K562 (cell line): ENCODE measurements at regions of chr1 and their contacts with region 1.

Region 1: GRCh38 chr1:24502709-24503058 is at the start of gene RCAN3:
- DNase-seq: peak; percentile 95 to 98 (median 97)
- ATAC-seq: peak; percentile 96
- H3K4me3 ChIP-seq: peak within 1 kb of the TSS; percentile 67
- H3K27ac ChIP-seq: peak within 1 kb of the TSS; percentile 78
- H3K4me1 ChIP-seq: peaks cover 18 to 22% of the 10 kb centered on the region in 2 experiments
- H3K27me3 ChIP-seq: peaks cover 33 to 43% of the 10 kb centered on the region in 2 experiments
- CTCF ChIP-seq: no peak
- EP300 ChIP-seq: no peak
- POLR2A ChIP-seq: no peak
- RAD21 ChIP-seq: no peak
- polyA plus RNA-seq, gene RCAN3: 0.10 to 0.11 TPM

Region 2: DNA sequence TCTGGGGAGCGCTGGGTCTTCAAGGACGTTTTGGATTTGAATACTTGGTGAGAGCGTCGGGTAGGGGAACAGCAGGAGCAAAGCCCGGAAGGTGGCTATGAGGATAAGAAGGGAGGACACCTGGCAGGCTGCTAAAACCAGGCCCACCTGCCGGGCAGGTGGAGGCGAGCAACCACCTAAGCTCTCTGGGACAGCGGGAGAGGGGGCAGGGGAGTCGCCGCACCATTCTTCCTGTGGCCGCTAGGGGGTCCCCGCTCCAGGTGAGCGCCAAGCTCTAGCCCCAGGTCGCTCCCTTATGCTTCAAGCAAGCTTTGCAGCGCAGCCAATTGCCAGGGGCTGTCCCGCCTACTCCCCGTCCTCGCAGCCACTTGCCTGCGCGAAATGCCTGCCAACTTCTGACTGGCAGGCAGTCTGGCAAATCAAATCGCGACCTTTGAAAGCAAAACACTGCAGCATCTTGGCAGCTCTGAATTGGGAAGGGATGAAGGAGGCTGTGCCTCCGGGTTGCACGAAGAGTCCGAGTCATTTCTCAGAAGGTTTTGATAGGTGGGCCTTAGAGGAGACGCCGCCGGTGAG is 87.3 kb before region 1 on chr1 and contains the start of gene NIPAL3:
- CTCF ChIA-PET with region 1: no interaction called
- POLR2A ChIA-PET with region 1: interaction called, 4 read pairs
- in situ Hi-C with region 1: no loop called
- intact Hi-C with region 1: loop called (anchors 5 kb)
- DNase-seq: peak; percentile 91 to 100 (median 95)
- ATAC-seq: peak; percentile 90
- H3K4me3 ChIP-seq: peak within 1 kb of the TSS; percentile 53
- H3K27ac ChIP-seq: peak within 1 kb of the TSS; percentile 64
- H3K4me1 ChIP-seq: peaks cover 54 to 55% of the 10 kb centered on the region in 2 experiments
- H3K27me3 ChIP-seq: no peaks in the 10 kb centered on the region
- CTCF ChIP-seq: peak; percentile 94 to 97 (median 95)
- EP300 ChIP-seq: peak; percentile 29
- POLR2A ChIP-seq: peak; percentile 64
- RAD21 ChIP-seq: peak; percentile 27 to 65; a peak in 2 of 4 replicates
- polyA plus RNA-seq, gene NIPAL3: 10.5 to 12.2 TPM

Region 3: GRCh38 chr1:24946861-24947658 is 444.4 kb after region 1 on chr1:
- CTCF ChIA-PET with region 1: no interaction called
- POLR2A ChIA-PET with region 1: no interaction called
- in situ Hi-C with region 1: no loop called
- intact Hi-C with region 1: no loop called
- DNase-seq: no peak
- ATAC-seq: no peak; the same call in 2 of the 3 replicates
- H3K4me3 ChIP-seq: no peak overlapping the region
- H3K27ac ChIP-seq: no peak overlapping the region
- H3K4me1 ChIP-seq: peaks cover 1 to 7% of the 10 kb centered on the region in 2 experiments; a peak in 4 of 5 replicates
- H3K27me3 ChIP-seq: peaks cover 6 to 27% of the 10 kb centered on the region in 2 experiments; a peak in 4 of 5 replicates
- CTCF ChIP-seq: no peak
- EP300 ChIP-seq: no peak
- POLR2A ChIP-seq: no peak
- RAD21 ChIP-seq: no peak